ENCODE measurements at regions of chr6 and their contacts with region 1.

Region 1: DNA sequence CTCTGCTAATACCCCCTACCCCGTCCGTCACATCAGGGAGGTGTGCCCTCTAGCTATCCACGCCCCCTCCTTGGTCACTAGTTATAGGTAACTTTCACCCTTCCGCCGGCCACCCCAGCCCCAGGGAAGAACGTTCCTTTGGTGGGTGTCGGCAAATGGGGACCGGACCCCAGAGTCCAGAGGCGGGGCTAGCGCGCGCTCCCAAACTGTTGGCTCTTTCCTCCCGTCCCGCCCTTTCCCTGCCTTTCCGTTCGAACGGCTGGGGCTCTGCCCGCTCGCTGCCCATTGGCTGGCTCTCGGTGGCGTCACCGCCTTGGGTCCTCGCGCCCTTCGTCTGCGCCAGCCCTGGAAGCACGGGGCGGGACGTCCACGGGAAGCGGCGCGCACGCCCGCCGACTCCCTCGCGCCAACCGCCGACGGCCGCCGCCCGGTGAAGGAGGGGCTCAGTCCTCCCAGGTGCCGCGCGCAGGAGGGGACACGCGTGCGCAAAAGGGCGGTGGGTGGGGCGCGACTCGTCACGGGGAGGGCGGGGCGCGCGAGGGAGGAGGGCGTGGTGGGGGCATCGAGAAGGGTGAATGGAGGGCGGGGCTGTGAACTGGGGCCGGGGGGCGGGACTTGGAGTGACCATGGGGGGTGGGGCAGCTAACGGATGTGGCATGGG is 634 bp upstream of the PHF1 start:
- DNase-seq: peak; percentile 90 to 99
- H3K4me3 ChIP-seq: peak overlapping the region; percentile 84
- H3K27ac ChIP-seq: peak overlapping the region; percentile 35; the same call in 1 of the 2 replicates
- H3K4me1 ChIP-seq: peaks cover 11% of the 10 kb centered on the region; the same call in 1 of the 2 replicates
- H3K27me3 ChIP-seq: no peaks in the 10 kb centered on the region
- CTCF ChIP-seq: no peak

Region 2: DNA sequence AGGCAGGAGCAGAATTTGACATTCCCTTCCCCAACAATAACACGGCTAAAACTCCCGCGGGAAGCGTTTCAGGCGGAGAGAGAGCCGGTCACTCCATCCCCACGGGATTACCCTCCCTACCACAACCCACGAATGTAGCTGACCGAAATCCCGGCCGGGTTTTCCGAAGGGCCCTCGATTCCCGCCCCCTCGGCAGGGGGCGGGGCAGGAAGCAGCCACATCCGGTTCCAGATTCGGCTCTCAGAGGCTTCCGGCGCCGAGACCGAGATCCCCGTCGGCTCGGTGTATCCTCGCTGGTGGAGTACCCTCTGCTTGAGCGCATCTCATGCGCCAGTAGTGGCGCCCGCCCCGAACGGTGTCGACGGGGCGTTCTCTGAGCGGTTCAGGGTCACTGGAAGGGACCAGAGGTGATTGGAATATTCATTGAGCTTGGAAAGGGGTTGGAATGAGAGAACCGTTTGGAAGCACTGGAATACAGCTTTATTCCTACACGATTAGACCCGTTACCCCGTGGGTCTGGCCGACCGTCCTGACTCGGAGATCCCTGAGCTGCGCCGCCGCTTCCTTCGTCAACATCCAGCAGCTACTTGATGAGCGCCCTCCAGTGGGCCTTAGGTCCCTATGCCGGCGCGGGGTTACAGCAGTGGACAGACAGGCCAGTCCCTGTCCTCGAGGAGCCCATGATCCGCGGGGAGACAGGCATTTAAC is 110.8 kb before region 1 on chr6:
- CTCF ChIA-PET with region 1: no interaction called
- POLR2A ChIA-PET with region 1: interaction called, 3 read pairs
- intact Hi-C with region 1: loop called (anchors 5 kb)
- DNase-seq: peak; percentile 72 to 87
- H3K4me3 ChIP-seq: peak overlapping the region; percentile 75
- H3K27ac ChIP-seq: peak overlapping the region; percentile 88
- H3K4me1 ChIP-seq: peaks cover 23% of the 10 kb centered on the region
- H3K27me3 ChIP-seq: no peaks in the 10 kb centered on the region
- CTCF ChIP-seq: peak; percentile 78

Region 3: DNA sequence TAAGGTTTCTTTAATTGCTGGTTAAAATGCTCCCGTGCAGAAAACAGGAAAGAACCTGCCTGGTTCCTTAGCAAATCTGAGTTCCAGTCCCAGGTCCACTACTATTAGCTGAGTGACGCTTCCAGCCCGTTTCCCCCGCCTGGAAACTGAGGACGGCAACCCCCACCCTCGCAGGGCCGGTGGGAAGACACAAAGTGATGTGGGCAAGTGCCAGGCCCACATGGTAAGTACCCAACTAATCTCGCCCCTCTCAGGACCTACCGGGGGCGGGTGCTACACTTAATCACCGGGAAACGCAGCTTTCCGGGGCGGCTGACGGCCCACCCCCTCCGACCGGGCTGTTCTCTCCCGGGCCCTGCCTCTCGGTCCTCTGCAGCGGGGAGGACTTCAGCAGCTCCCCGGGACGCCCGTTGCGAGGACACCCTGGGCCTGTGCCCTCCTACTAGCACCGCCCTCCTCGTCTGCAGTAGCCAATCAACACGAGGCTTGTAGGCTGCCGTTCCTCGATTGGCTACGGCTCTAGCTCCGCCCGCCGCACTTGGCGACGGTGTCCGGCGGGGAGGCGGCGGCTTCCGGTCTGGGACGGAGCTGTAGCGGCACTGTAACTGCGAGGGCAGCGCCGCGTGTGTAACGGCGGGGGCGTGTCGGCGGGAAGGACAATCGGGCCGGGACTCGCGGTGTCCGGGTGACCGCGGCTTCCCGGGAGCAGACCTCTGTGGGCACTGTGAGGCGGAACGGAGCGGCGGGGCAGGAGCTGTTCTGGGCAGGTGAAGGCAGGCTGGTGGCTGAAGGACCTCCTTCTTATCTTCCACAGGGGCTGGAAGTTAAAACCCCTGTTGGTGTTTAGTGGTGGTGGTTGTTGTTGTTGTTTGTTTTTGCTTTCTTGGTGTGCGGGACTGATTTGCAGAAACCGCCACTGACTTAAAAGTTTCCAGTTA is 44.1 kb after region 1 on chr6 and contains the start of gene ZBTB9:
- CTCF ChIA-PET with region 1: no interaction called
- POLR2A ChIA-PET with region 1: interaction called, 5 read pairs
- intact Hi-C with region 1: loop called (anchors 5 kb)
- DNase-seq: peak; percentile 91 to 95
- H3K4me3 ChIP-seq: peak within 1 kb of the TSS; percentile 95
- H3K27ac ChIP-seq: no peak within 1 kb of the TSS
- H3K4me1 ChIP-seq: peaks cover 6% of the 10 kb centered on the region
- H3K27me3 ChIP-seq: no peaks in the 10 kb centered on the region
- CTCF ChIP-seq: no peak
- total RNA-seq, gene ZBTB9: 7.9 and 8.4 TPM in 2 replicates

Region 4: DNA sequence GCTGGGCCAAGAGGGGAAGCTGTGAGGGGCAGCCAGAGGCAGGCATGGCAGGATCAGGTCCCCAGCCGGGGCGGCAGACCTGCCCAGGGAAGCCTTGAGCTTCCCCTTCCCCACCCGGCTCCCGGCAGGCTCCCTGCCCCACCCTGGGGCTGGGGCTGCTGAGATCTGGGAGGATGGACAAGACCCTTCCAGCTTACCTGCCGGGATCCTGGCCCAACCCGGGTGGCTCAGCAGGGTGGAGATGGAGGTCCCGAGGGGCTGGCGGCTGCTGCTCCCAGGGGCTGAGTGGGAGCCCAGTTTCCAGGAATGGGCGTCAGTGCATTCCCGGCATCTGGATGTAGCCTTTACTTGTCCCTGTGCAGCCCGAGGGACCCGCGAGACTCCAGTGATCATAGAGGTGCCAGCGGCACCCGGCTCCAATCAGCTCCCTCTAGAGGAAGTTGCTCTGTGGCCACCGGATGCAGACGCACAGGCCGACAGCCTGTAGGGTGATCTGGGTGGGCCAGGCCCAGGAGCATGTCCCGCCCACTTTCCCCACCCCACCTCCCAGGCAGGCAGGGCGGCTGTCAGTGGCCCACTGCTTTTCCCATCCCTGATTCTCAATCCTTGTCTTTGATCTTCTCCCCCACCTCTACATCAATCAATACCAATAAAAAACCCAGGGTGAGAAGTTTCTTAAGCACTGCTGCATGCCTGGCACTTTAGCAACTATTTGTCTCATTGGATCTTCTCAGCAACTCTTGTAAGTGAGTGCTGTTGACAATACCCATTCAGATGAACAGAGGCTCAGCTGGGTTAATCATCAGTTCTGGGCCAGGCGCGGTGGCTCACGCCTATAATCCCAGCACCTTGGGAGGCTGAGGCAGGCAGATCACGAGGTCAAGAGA is 169.9 kb after region 1 on chr6 and contains the start of gene BAK1:
- CTCF ChIA-PET with region 1: interaction called, 3 read pairs
- POLR2A ChIA-PET with region 1: interaction called, 13 read pairs
- intact Hi-C with region 1: loop called (anchors 5 kb)
- DNase-seq: peak; percentile 84 to 87
- H3K4me3 ChIP-seq: peak within 1 kb of the TSS; percentile 98
- H3K27ac ChIP-seq: no peak within 1 kb of the TSS
- H3K4me1 ChIP-seq: peaks cover 15% of the 10 kb centered on the region
- H3K27me3 ChIP-seq: no peaks in the 10 kb centered on the region
- CTCF ChIP-seq: peak; percentile 59
- total RNA-seq, gene BAK1: 24.6 and 28.4 TPM in 2 replicates

Measured in PC-9 (cell line).